Esophagus squamous epithelium (tissue), 5 donors: ENCODE measurements at regions of chr16 and their contacts with region 1.

Region 1: DNA sequence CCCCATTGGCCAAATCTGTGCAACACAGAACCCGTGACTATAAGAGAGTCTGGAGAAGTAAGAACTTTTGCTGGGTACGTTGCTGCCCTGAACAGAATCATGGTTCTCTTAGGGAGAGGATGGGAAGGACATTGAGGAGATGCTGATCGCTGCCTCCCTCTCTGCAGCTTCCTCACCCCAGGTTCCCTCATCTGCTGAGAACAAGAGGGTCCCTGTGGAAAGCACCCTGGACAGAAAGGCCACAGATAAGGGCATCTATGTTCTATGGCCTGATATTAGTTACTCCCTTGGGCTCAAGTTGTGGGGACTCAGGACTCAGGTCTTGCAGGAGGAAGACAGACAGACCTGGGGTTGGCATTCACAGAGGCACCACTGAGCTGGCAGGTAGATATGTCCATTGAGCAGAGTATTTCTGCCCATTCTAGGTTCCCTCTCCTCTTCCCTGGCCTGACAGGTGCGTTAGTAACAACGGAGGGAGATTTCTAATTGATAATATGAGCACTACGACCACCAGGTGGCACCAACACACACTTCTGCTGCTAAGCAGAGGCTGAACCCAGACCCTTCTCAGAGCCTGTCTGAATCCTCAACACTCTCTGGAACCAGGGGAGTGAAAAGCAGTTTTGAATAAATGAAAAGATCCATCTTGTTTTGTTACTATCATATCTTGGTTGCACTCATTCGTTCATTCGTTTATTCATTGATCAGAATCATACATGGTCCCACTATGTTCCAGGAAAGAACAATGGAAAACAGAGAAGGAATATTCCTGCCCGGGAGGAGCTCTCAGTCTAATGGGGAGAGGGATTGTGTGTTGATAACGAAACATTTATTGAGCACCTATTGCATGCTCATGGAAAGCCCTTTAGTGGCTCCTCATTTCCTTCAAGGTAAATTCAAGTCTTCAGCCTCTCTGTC is 56.4 kb downstream of the SLC6A2 start:
- DNase-seq: no peak
- H3K4me3 ChIP-seq: no peak overlapping the region
- H3K27ac ChIP-seq: no peak overlapping the region
- H3K4me1 ChIP-seq: no peaks in the 10 kb centered on the region
- H3K27me3 ChIP-seq: peaks cover 0 to 30% (median 0%) of the 10 kb centered on the region in 4 donors
- CTCF ChIP-seq: peak; percentile 29 to 67 (median 62)
- POLR2A ChIP-seq: no peak

Region 2: GRCh38 chr16:55842369-55843104 is 130.3 kb after region 1 on chr16:
- intact Hi-C with region 1: loop called (anchors 5 kb)
- DNase-seq: no peak
- H3K4me3 ChIP-seq: no peak overlapping the region
- H3K27ac ChIP-seq: no peak overlapping the region
- H3K4me1 ChIP-seq: peaks cover 0 to 8% (median 4%) of the 10 kb centered on the region in 3 donors
- H3K27me3 ChIP-seq: peaks cover 0 to 38% (median 0%) of the 10 kb centered on the region in 4 donors
- CTCF ChIP-seq: peak; percentile 60 to 81 (median 78)
- POLR2A ChIP-seq: no peak